Left ventricle myocardium superior (tissue), 1 donor: ENCODE measurements at regions of chr10 and their contacts with region 1.

Region 1: GRCh38 chr10:128631801-128632241 is 505.6 kb upstream of the MKI67 start:
- DNase-seq: no peak
- ATAC-seq: no peak

Region 2: DNA sequence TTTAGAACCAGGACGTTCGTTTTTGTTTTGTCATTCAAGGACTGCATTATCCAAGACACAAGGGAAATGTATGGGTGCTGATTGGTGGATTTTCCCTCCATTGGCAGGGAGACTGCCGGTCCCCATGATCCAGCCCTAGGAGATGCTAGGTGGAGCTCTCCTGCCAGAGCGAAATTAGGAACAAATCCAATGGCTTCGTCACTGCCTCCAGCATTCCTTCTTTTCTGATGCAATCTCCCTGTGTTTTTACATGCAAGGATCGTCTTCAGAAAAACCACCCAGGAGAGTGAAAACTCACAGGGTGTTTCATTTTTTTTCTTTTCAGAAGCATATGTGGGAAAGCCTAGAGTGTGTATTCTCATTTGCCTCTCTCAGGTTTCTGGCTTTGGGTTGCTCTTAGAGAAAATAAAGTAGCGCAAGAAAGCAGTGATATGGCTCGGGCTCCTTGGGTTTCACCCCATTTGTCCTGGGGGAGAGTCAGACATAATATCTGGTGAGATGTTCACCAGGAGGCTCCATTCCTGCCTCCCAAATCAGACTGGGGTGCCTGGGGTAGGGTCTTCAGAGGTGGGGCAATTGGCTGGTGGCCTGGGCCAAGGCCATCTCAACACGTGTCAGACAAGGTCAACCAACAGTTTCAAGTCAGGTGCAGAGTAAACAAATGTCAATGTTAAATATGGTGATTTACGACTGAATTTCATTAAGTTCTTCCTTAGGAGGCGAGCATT is 54.7 kb before region 1 on chr10:
- intact Hi-C with region 1: no loop called
- DNase-seq: no peak
- ATAC-seq: no peak

Region 3: DNA sequence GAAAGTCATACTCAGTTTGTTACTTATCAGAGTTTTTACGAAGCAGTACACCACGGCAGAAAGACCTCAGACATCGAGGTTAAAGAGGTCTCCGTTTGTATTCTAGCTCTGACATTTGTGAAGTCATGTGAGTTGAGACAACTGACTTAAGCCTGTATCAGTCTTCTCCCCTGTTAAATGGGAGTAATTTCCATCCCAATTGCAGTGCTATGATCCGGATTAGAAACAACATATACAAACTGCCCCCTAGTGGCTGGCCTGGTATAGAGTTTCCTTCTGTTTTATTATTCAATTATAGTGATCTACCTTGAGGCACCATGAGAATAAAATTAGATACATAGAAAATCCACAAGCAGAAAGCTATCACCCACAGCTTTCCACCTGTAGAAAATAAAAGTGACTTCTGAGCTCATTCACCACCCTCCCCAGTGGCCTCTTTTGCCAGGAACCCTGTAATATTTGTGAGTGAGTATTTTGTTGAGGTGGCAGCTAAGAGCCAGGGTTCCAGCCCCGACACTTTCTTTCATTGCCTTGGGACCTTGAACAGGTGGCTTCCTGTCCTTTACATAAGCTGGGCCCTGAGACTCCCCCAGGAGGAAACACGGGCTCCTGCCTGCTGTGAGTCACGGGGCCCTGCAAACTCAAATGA is 228.0 kb after region 1 on chr10:
- intact Hi-C with region 1: loop called (anchors 10 kb)
- DNase-seq: no peak
- ATAC-seq: no peak